Lower leg skin (tissue), 4 donors: ENCODE measurements at regions of chr19 and their contacts with region 1.

Region 1: DNA sequence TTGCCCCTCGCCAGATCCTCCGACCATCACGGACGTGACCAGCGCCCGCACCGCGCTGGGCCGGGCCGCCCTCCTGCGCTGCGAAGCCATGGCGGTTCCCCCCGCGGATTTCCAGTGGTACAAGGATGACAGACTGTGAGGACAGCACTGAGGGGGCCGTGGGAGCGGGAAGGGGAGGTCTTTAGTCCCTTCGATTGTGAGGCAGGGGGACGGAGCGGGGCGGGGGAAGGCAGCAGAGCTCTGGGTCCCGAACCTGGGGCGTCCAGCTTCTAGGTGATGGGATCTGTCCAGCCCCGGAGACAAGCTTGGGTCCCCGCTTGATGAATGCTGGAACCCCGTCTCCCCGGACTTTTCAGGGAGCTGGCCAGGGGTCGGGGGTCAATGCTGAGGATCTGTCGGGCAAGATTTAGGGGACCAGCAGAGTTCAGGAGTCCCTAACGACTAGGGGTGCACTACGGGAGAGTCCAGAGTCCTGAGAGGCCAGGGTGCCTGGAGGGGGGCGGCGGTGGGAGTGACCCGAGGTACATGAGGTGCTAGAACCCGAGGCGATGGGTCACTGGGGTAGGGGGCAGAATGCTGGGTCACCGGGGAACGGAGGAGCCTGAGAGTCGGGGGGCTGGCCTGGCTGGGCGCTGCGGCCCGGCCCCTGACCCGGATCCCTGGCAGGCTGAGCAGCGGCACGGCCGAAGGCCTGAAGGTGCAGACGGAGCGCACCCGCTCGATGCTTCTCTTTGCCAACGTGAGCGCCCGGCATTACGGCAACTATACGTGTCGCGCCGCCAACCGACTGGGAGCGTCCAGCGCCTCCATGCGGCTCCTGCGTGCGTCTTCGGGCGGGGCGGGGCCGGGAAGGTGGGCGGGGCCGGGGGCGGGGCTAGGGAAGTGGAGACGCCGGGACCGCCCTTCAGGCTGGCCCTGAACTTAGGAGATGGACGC is 14.6 kb downstream of the VSIG10L start:
- DNase-seq: no peak
- H3K4me3 ChIP-seq: no peak overlapping the region
- CTCF ChIP-seq: no peak
- POLR2A ChIP-seq: no peak

Region 2: DNA sequence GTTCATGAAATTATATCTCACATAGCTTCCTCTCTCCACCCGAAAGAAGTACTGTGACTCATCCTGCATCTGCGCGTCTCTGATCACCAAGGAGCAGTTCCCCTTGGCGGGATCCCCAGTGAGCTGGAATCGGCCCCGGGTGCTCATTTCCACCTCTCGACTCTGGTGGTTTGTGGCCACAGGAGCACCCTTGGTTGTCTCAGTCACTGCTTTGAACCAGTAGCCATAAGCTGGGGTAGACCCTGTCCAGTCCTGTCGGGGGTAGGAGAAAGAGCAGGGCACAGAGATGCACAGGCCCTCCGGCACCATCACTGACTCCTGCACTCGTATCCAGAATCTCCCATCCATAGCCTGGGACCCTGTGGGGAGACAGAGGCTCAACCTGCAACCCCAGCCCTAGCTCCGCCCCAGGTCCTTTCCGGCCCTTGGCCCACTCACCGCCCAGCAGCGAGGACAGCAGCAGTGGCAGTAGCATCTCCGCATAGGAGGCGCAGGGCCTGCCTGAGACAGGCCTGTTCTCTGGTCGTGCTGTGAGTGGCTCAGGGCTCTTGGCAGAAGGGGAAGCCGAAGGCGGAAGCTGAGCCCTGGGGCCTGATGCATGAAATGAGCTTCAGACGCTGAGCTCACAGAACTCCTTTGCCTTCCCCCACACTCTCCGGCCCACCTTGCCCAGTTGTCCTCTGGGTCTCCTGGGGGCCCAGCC is 89.9 kb after region 1 on chr19 and contains the start of gene SIGLEC10:
- intact Hi-C with region 1: loop called (anchors 10 kb)
- DNase-seq: peak; percentile 16 to 85
- H3K4me3 ChIP-seq: no peak within 1 kb of the TSS
- CTCF ChIP-seq: no peak
- POLR2A ChIP-seq: no peak
- total RNA-seq, gene SIGLEC10: 0.53 to 8.6 (median 1.8) TPM